ENCODE measurements at regions of chr11 and their contacts with region 1.

Region 1: GRCh38 chr11:61792310-61793085 is at the starts of genes FEN1 and TMEM258:
- DNase-seq: peak; percentile 94
- ATAC-seq: peak; percentile 87
- H3K4me3 ChIP-seq: peak within 1 kb of the TSS; percentile 74
- H3K27ac ChIP-seq: peak within 1 kb of the TSS; percentile 98
- H3K4me1 ChIP-seq: peaks cover 3% of the 10 kb centered on the region
- H3K27me3 ChIP-seq: no peaks in the 10 kb centered on the region
- CTCF ChIP-seq: 0 out of 2 replicates have a peak, but pooled peaks have one; percentile 2
- POLR2A ChIP-seq: peak; percentile 95
- RAD21 ChIP-seq: no peak
- total RNA-seq, gene FEN1: 41.9 and 43.9 TPM in 2 replicates
- total RNA-seq, gene TMEM258: 70.0 and 107 TPM in 2 replicates

Region 2: DNA sequence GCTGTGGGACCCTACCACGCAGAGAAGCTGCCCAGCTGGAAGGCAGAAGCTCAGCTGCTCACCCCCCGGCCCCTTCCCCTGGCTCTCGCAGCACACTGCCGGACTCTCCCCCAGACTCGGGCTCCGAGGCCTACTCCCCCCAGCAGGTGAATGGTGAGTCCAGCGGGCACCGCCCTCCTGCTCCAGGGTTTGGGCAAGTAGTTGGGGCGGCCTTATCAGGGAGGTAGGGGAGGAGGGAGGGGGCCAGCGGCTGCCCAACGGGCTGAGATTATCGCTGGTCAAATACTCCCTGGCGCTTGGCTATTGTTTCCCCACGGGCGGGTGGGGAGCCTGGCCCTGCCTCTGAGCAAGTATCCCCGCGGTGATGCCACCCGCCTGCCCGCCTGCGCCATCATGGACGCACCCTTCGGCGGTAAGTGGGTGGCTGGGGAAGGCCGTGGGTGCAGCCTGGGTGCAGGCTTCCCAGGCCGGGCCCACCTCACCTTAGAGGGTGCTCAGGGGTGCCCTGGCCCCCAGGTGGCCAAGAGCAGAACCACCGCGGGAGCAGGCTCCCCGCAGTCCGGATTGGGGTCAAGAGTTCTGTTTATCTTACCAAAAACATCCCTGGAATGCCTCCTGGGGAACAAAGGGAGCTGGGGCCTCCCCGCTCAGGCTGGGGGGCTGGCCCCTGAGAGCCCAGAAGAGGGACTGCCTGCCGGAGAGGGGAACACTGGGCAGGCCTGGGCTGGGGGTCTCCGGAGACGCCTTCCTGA is 23.2 kb before region 1 on chr11:
- CTCF ChIA-PET with region 1: no interaction called
- POLR2A ChIA-PET with region 1: no interaction called
- dilution Hi-C with region 1: no loop called
- in situ Hi-C with region 1: no loop called
- intact Hi-C with region 1: no loop called
- DNase-seq: peak; percentile 48
- ATAC-seq: peak; percentile 80
- H3K4me3 ChIP-seq: no peak overlapping the region
- H3K27ac ChIP-seq: peak overlapping the region; percentile 49
- H3K4me1 ChIP-seq: peaks cover 10% of the 10 kb centered on the region
- H3K27me3 ChIP-seq: no peaks in the 10 kb centered on the region
- CTCF ChIP-seq: peak; percentile 47
- POLR2A ChIP-seq: no peak
- RAD21 ChIP-seq: no peak

Region 3: DNA sequence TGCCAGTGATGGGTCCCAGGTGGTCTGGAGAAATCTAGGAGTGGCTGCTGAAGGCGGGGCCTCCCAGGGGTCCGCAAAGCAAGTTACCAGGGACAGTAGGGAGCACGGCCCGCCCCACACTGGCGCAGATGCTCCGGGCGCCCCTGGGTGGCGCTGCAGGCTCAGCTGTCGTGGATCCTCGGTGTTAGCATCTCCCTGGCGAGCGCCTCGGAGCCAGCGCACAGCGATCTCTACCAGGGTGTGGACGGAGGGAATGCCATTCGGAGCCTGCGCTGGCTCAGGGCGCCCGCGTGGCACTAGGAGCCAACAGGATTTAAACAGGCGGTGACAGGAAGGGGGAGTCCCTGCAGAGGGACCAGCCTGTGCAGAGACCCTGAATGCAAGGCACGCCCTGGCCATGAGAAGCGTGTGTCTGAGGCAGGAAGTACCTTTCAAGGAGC is 78.7 kb after region 1 on chr11:
- CTCF ChIA-PET with region 1: interaction called, 3 read pairs
- POLR2A ChIA-PET with region 1: interaction called, 4 read pairs
- dilution Hi-C with region 1: no loop called
- in situ Hi-C with region 1: no loop called
- intact Hi-C with region 1: loop called (anchors 1 kb)
- DNase-seq: peak; percentile 67
- ATAC-seq: peak; percentile 98
- H3K4me3 ChIP-seq: no peak overlapping the region
- H3K27ac ChIP-seq: no peak overlapping the region
- H3K4me1 ChIP-seq: peaks cover 2% of the 10 kb centered on the region
- H3K27me3 ChIP-seq: no peaks in the 10 kb centered on the region
- CTCF ChIP-seq: peak; percentile 96
- POLR2A ChIP-seq: no peak
- RAD21 ChIP-seq: peak; percentile 94

Region 4: DNA sequence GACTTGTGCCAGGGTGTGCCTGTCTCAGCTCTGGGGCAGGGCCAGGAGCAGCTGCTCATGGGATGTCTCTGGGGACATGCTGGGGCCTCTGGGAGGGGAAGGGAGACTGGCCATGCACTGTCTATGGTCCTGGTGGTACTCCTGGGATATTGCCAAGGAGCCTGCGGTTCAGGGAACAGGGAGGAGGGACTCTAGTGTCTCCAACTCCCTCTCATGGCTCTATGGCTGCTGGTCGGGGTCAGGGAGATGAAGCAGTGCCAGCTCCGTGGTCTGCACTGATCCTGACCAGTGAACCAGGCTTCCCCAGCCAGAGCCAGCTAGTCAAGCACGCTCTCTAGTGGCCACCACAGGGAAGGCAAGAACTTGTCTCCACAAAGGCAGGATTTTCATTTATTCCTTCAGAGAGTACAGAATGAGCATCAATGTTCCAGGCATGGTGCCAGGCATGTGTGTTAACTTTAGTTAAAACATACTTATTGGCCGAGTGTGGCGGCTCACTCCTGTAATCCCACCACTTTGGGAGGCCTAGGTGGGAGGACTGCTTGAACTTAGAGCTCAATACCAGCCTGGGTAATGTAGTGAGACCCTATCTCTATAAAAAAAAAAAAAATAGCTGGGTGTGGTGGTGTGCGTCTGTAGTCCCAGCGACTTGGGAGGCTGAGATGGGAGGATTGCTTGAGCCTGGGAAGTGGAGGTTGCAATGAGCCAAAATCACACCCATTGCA is 155.2 kb after region 1 on chr11:
- CTCF ChIA-PET with region 1: interaction called, 4 read pairs
- POLR2A ChIA-PET with region 1: no interaction called
- dilution Hi-C with region 1: no loop called
- in situ Hi-C with region 1: loop called (anchors 5 kb)
- intact Hi-C with region 1: loop called (anchors 1 kb)
- DNase-seq: peak; percentile 88
- ATAC-seq: peak; percentile 85
- H3K4me3 ChIP-seq: no peak overlapping the region
- H3K27ac ChIP-seq: no peak overlapping the region
- H3K4me1 ChIP-seq: peaks cover 8% of the 10 kb centered on the region; the same call in 1 of the 2 replicates
- H3K27me3 ChIP-seq: peaks cover 2% of the 10 kb centered on the region
- CTCF ChIP-seq: peak; percentile 98
- POLR2A ChIP-seq: 0 out of 2 replicates have a peak, but pooled peaks have one; percentile 46
- RAD21 ChIP-seq: peak; percentile 99

Region 5: GRCh38 chr11:62108017-62108750 is 315.7 kb after region 1 on chr11:
- CTCF ChIA-PET with region 1: interaction called, 27 read pairs
- POLR2A ChIA-PET with region 1: no interaction called
- dilution Hi-C with region 1: no loop called
- in situ Hi-C with region 1: loop called (anchors 10 kb)
- intact Hi-C with region 1: loop called (anchors 1 kb)
- DNase-seq: peak; percentile 74
- ATAC-seq: peak; percentile 30
- H3K4me3 ChIP-seq: no peak overlapping the region
- H3K27ac ChIP-seq: no peak overlapping the region
- H3K4me1 ChIP-seq: peaks cover 12% of the 10 kb centered on the region
- H3K27me3 ChIP-seq: no peaks in the 10 kb centered on the region
- CTCF ChIP-seq: peak; percentile 91
- POLR2A ChIP-seq: no peak
- RAD21 ChIP-seq: peak; percentile 87